Heart right ventricle (tissue), 16 donors: ENCODE measurements at regions of chr1 and their contacts with region 1.

Region 1: DNA sequence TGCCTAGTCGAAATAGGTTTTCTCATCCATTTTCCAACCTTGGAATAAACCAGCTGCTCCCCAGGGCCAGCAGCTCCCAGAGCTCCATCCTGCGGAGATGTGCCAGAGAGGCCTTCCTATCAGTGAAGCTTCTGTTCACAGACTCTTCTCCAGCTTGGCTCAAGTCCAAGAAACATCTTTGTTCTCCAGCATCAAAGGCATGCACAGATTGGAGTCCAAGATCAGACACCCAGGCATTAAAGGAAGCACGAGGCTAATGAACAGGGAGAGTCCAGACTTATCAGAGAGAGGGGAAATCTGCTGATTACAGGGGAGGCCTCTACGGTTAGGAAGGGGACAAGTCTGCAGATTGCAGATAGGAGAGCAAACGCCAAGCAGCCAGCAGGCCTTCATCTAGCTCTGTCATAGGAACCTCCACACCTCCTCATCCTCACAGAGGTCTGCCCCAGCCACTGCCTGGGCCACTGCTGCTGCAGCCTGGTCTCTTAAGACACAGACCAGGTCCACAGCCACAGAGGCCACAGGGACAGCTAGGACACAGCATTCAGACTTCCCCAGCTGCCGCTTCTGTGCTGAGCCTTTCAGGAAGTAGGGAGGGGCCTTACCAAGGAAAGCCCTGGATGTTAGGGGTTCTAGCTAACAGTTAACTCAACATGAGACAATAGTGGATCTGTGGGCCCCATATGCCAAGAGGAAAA is 3.4 kb downstream of the PRR9 start:
- DNase-seq: no peak
- ATAC-seq: no peak
- H3K4me3 ChIP-seq: no peak overlapping the region
- H3K27ac ChIP-seq: no peak overlapping the region
- H3K4me1 ChIP-seq: no peaks in the 10 kb centered on the region
- H3K27me3 ChIP-seq: peaks cover 0 to 35% (median 18%) of the 10 kb centered on the region in 7 donors
- CTCF ChIP-seq: no peak

Region 2: DNA sequence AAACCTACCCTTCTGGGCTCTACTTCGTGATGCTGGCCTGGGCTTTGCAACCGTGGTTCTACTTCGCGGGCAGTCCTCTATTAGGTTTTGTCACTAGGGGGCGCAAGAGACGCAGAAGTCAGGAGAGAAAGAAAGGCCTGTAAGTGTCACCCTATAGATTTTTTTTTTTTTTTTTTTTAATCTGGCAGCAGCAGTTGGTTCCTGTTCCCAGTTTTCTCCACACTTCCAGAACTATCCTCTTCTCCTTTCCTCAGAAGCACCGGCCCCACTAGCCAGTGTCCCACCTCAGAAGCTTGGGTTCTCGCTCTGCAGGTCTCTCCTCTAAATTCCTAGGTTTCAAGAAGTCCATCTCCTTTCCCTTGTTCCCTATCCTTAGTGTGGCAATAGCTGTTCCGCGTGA is 566.6 kb before region 1 on chr1:
- intact Hi-C with region 1: loop called in 1 of 10 experiments (anchors 10 kb)
- DNase-seq: no peak
- ATAC-seq: no peak
- H3K4me3 ChIP-seq: no peak overlapping the region
- H3K27ac ChIP-seq: no peak overlapping the region
- H3K4me1 ChIP-seq: no peaks in the 10 kb centered on the region
- H3K27me3 ChIP-seq: peaks cover 0 to 28% (median 5%) of the 10 kb centered on the region in 7 donors
- CTCF ChIP-seq: peak in 6 of 9 donors; percentile 32 to 66 (median 46)

Region 3: DNA sequence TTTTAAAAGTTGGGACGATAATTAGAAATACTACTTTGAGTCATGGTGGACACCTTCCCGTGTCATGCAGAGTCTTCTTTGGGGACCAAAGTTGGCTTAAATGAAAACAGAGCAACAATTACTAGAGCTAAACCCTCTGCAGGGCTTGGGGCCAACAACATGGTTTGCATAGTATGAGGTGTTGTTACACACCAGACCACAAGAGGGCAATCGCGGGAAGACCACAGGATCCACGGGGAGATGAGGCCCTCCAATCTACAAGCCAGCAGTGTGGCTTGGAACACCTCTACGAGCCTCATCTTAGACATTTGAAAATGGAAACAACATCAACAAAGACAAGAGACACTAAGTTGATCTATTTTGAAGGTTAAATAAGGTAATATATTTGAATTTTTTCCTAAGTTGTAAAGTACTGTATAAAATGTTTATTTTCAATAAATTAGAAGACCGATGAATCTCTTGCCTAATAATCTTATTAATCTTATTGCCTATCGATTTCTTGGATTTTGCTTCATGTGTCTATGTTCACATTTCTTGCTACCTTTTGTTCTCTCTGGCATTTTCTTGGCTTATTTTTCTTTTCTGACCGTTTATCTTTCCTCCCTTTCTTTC is 350.8 kb before region 1 on chr1:
- intact Hi-C with region 1: loop called in 7 of 10 experiments (anchors 5 to 10 kb)
- DNase-seq: peak; percentile 13 to 36
- ATAC-seq: peak in 3 of 8 donors; percentile 38 to 56 (median 56)
- H3K4me3 ChIP-seq: no peak overlapping the region
- H3K27ac ChIP-seq: no peak overlapping the region
- H3K4me1 ChIP-seq: no peaks in the 10 kb centered on the region
- H3K27me3 ChIP-seq: peaks cover 0 to 20% (median 3%) of the 10 kb centered on the region in 7 donors
- CTCF ChIP-seq: peak in 8 of 9 donors; percentile 32 to 78 (median 70)

Region 4: GRCh38 chr1:153168686-153169085 is 52.1 kb before region 1 on chr1:
- intact Hi-C with region 1: no loop called
- DNase-seq: no peak
- ATAC-seq: no peak
- H3K4me3 ChIP-seq: no peak overlapping the region
- H3K27ac ChIP-seq: no peak overlapping the region
- H3K4me1 ChIP-seq: no peaks in the 10 kb centered on the region
- H3K27me3 ChIP-seq: no peaks in the 10 kb centered on the region
- CTCF ChIP-seq: no peak